IMR-90 (cell line): ENCODE measurements at regions of chr2 and their contacts with region 1.

Region 1: GRCh38 chr2:55050133-55050994 is at the start of gene RTN4:
- DNase-seq: peak; percentile 100
- ATAC-seq: peak; percentile 82
- H3K4me3 ChIP-seq: peak within 1 kb of the TSS; percentile 70
- H3K27ac ChIP-seq: peak within 1 kb of the TSS; percentile 95
- H3K4me1 ChIP-seq: no peaks in the 10 kb centered on the region; the same call in 1 of the 2 replicates
- H3K27me3 ChIP-seq: no peaks in the 10 kb centered on the region
- CTCF ChIP-seq: peak; percentile 21; the same call in 1 of the 2 replicates
- POLR2A ChIP-seq: peak; percentile 99
- RAD21 ChIP-seq: peak; percentile 31; the same call in 1 of the 2 replicates
- total RNA-seq, gene RTN4: 77.8 and 216 TPM in 2 replicates

Region 2: GRCh38 chr2:54723131-54723995 is 327.0 kb before region 1 on chr2 and contains the start of gene EML6:
- CTCF ChIA-PET with region 1: no interaction called
- POLR2A ChIA-PET with region 1: no interaction called
- dilution Hi-C with region 1: no loop called
- in situ Hi-C with region 1: no loop called
- intact Hi-C with region 1: loop called (anchors 10 kb)
- DNase-seq: peak; percentile 98
- ATAC-seq: peak; percentile 99
- H3K4me3 ChIP-seq: peak within 1 kb of the TSS; percentile 82
- H3K27ac ChIP-seq: peak within 1 kb of the TSS; percentile 42
- H3K4me1 ChIP-seq: peaks cover 3% of the 10 kb centered on the region; the same call in 1 of the 2 replicates
- H3K27me3 ChIP-seq: peaks cover 32% of the 10 kb centered on the region
- CTCF ChIP-seq: no peak; the same call in 1 of the 2 replicates
- POLR2A ChIP-seq: peak; percentile 62
- RAD21 ChIP-seq: no peak; the same call in 1 of the 2 replicates
- total RNA-seq, gene EML6: 0.18 and 0.28 TPM in 2 replicates

Region 3: GRCh38 chr2:54986264-54986663 is 64.1 kb before region 1 on chr2:
- CTCF ChIA-PET with region 1: no interaction called
- POLR2A ChIA-PET with region 1: interaction called, 9 read pairs
- dilution Hi-C with region 1: no loop called
- in situ Hi-C with region 1: no loop called
- intact Hi-C with region 1: loop called (anchors 5 kb)
- DNase-seq: peak; percentile 57
- ATAC-seq: peak; percentile 21; the same call in 1 of the 2 replicates
- H3K4me3 ChIP-seq: no peak overlapping the region
- H3K27ac ChIP-seq: no peak overlapping the region
- H3K4me1 ChIP-seq: peaks cover 9% of the 10 kb centered on the region
- H3K27me3 ChIP-seq: no peaks in the 10 kb centered on the region
- CTCF ChIP-seq: no peak
- POLR2A ChIP-seq: no peak
- RAD21 ChIP-seq: no peak

Region 4: DNA sequence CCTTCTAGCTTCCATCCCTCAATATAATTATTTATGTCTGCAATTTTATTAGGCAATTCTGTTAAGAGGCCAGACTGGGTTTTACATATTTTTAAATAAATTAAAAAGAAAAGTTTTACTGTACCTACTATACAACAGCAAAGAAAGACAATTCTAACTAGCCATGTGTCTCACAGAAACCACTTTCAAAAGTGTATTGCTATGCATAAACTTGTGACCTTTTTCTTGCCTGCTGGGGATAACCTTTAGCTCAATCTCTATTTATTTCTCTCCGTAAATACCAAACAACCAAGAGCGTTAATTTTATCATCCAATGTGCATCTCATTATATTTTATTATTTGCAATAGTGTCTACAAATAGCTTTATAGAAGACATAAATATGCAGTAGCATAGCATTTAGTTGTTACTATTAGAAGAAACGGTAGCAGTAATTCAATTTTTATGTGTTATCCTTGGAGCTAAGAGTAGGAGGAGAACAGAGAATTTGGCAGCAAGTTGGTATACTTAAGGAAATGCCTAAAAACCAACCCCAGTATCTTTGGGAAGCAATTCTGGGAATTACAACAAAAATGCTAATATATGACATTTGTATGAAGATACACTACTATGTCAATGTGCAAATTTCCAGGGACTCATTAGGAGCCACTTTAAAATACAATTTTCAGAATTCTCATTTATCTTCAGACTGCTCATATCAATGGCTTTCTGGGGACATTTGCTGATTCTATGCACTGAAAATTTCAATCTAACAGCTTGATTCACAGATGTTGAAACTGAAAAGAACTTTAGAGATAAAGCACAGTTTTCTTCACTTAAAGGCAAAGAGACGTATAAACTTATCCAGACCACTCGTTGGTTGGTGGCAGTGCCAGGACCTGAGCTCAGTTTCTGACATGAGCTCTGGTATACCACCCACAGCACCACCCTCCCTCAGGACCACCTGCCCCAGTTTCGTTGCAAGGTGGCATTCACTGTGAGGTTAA is 22.9 kb after region 1 on chr2:
- CTCF ChIA-PET with region 1: interaction called, 3 read pairs
- POLR2A ChIA-PET with region 1: interaction called, 12 read pairs
- dilution Hi-C with region 1: no loop called
- in situ Hi-C with region 1: no loop called
- intact Hi-C with region 1: no loop called
- DNase-seq: no peak
- ATAC-seq: no peak
- H3K4me3 ChIP-seq: no peak overlapping the region
- H3K27ac ChIP-seq: no peak overlapping the region
- H3K4me1 ChIP-seq: no peaks in the 10 kb centered on the region
- H3K27me3 ChIP-seq: no peaks in the 10 kb centered on the region
- CTCF ChIP-seq: no peak
- POLR2A ChIP-seq: no peak
- RAD21 ChIP-seq: no peak

Region 5: GRCh38 chr2:55099878-55100820 is 49.8 kb after region 1 on chr2:
- CTCF ChIA-PET with region 1: interaction called, 4 read pairs
- POLR2A ChIA-PET with region 1: interaction called, 11 read pairs
- dilution Hi-C with region 1: no loop called
- in situ Hi-C with region 1: no loop called
- intact Hi-C with region 1: loop called (anchors 1 kb)
- DNase-seq: peak; percentile 84
- ATAC-seq: peak; percentile 31
- H3K4me3 ChIP-seq: no peak overlapping the region
- H3K27ac ChIP-seq: peak overlapping the region; percentile 99
- H3K4me1 ChIP-seq: peaks cover 20% of the 10 kb centered on the region
- H3K27me3 ChIP-seq: no peaks in the 10 kb centered on the region
- CTCF ChIP-seq: no peak
- POLR2A ChIP-seq: no peak
- RAD21 ChIP-seq: no peak

Region 6: DNA sequence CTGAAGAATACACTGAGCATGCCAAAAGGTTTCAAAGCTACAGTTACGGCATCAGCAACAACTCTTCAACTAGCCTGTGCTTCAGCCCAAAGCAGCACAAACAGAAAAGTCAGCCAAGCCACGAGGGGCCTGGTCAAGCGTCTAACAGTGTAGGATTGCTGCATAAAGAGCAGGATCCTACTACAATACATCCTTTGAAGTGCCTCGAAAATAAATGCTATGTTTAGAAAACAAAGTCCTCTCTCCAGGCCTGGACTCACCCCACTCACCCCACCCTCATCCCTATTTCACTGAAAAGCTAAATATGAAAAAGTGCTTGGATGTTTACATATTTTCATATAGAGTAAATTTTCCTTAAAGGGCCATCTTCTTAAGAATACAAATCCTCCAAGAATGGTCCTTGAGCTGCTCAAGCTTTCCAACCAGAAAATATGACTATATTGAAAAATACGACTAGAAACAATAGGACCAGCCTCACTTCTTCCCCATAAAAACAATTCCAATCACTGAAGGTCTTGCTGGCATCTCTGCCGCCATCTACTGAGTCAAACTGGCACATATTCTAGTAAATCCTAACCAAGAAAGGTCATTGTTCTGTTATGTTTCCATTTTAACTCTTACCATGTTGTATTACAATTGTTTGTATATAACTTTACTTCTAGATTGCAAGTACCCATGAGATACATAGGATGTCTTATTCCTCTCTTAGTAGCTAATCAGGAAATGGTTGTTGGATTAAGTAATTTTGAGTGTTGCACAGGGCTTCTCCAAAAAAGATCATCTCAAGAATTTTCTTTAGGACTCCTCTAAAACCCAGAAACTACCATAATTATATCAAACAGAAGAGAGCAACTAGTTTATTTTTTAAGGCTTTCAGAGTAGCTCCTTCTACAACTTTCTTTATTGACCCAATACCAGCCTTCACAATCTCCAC is 118.1 kb after region 1 on chr2:
- CTCF ChIA-PET with region 1: interaction called, 26 read pairs
- POLR2A ChIA-PET with region 1: interaction called, 7 read pairs
- dilution Hi-C with region 1: no loop called
- in situ Hi-C with region 1: loop called (anchors 5 kb)
- intact Hi-C with region 1: loop called (anchors 1 kb)
- DNase-seq: peak; percentile 85
- ATAC-seq: peak; percentile 69
- H3K4me3 ChIP-seq: no peak overlapping the region
- H3K27ac ChIP-seq: peak overlapping the region; percentile 59
- H3K4me1 ChIP-seq: peaks cover 24% of the 10 kb centered on the region
- H3K27me3 ChIP-seq: no peaks in the 10 kb centered on the region
- CTCF ChIP-seq: peak; percentile 86
- POLR2A ChIP-seq: peak; percentile 35; the same call in 1 of the 2 replicates
- RAD21 ChIP-seq: peak; percentile 95

Region 7: DNA sequence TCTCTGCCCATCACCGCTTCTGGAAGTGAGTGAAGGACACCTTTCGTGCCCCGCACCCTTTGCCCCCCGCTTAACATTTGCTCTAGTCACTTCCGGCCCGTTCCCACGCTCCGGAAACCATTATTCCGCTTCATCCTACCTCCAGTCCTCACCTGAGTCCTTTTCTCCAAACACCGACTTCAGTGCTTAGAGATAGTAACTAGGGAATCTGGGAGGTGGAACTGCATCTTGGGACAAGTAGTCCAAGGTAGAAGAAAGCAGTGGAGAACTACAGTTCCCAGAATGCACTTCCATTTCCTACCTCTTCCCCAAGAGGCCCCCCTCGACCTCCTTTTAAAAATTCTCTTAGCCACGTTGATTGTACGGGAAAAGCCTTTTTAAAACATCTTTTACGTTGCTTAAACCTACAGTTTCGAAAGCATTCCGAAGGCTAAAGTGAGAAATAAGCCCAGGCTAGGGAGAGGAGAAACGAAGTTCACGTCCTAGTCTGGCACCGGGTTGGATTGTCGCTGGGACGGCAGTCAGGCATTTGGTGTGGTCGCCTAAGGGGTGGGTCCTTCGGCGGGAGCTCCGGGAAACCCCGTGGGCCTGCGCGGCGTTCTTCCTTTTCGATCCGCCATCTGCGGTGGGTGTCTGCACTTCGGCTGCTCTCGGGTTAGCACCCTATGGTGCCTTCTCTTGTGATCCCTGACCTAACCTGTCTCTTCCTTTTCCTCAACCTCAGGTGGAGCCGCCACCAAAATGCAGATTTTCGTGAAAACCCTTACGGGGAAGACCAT is 181.9 kb after region 1 on chr2 and contains the starts of genes CLHC1 and RPS27A:
- CTCF ChIA-PET with region 1: no interaction called
- POLR2A ChIA-PET with region 1: no interaction called
- dilution Hi-C with region 1: no loop called
- in situ Hi-C with region 1: no loop called
- intact Hi-C with region 1: loop called (anchors 2 kb)
- DNase-seq: peak; percentile 97
- ATAC-seq: peak; percentile 93
- H3K4me3 ChIP-seq: peak within 1 kb of the TSS; percentile 75
- H3K27ac ChIP-seq: peak within 1 kb of the TSS; percentile 94
- H3K4me1 ChIP-seq: peaks cover 3% of the 10 kb centered on the region; the same call in 1 of the 2 replicates
- H3K27me3 ChIP-seq: no peaks in the 10 kb centered on the region
- CTCF ChIP-seq: no peak
- POLR2A ChIP-seq: peak; percentile 95
- RAD21 ChIP-seq: no peak
- total RNA-seq, gene CLHC1: 2.3 and 4.7 TPM in 2 replicates
- total RNA-seq, gene RPS27A: 496 and 1,448 TPM in 2 replicates

Region 8: DNA sequence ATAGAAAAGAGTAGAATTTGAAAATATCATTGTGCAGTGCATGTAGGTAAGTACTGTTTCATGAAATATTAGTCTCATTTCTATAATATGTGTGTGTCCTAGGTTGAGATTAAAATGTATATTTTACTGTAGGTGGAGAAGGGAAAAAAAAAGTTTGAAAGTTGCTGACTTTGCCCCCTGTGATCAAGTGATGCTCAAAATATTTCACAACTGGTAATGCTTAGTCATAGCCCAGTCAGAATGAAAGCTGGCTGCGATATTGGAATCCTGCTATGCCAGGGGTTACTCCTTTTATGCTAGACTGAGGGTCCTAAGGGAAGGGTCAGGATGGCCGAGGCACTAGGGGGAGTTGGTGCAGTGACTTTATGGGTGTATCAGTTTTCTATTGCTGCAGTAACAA is 449.7 kb after region 1 on chr2:
- CTCF ChIA-PET with region 1: no interaction called
- POLR2A ChIA-PET with region 1: no interaction called
- dilution Hi-C with region 1: no loop called
- in situ Hi-C with region 1: no loop called
- intact Hi-C with region 1: no loop called
- DNase-seq: peak; percentile 74
- ATAC-seq: peak; percentile 93
- H3K4me3 ChIP-seq: no peak overlapping the region
- H3K27ac ChIP-seq: no peak overlapping the region
- H3K4me1 ChIP-seq: peaks cover 2% of the 10 kb centered on the region; the same call in 1 of the 2 replicates
- H3K27me3 ChIP-seq: no peaks in the 10 kb centered on the region
- CTCF ChIP-seq: no peak
- POLR2A ChIP-seq: no peak
- RAD21 ChIP-seq: no peak

Region 9: GRCh38 chr2:55672630-55673029 is 622.3 kb after region 1 on chr2:
- CTCF ChIA-PET with region 1: no interaction called
- POLR2A ChIA-PET with region 1: no interaction called
- dilution Hi-C with region 1: no loop called
- in situ Hi-C with region 1: no loop called
- intact Hi-C with region 1: no loop called
- DNase-seq: no peak
- ATAC-seq: no peak
- H3K4me3 ChIP-seq: no peak overlapping the region
- H3K27ac ChIP-seq: no peak overlapping the region
- H3K4me1 ChIP-seq: no peaks in the 10 kb centered on the region
- H3K27me3 ChIP-seq: no peaks in the 10 kb centered on the region
- CTCF ChIP-seq: no peak
- POLR2A ChIP-seq: no peak
- RAD21 ChIP-seq: no peak